Uterus (tissue), 4 donors: ENCODE measurements at regions of chr9 and their contacts with region 1.

Region 1: DNA sequence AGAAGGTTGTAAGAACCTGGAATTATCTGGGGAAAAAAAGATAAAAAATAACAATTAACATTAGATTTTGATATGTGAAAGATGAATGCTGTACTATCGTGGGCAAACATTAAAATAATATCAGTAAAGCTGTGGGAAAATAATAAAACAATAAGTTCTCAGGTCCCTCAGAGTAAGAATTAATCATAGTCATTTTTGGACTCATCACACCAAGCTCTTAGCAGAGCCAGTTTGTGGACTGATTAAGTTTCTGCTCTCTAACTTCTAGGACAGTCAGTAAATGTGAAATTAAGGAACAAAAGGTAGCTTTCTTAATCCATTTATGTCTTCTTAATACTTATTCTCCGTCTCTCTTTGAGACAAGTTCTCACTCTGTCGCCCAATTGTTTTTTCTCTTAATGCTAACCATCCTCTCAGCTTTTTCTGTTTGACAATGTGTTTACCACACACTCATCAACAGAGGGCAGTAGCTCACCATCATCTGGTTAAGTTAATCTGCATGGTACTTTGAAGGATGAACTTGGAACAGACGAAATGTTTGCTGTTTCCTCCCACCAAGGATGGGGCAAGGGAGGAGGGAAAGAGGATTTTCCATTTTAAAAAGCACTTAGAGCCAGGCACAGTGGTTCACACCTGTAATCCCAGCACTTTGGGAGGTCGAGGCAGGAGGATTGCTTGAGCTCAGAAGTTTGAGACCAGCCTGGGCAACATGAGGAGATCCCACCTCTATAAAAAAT is 5.3 kb upstream of the ACO1 start:
- DNase-seq: peak in 1 of 2 donors; percentile 51
- H3K4me3 ChIP-seq: peak overlapping the region in 1 of 2 donors; percentile 1
- H3K27ac ChIP-seq: peak overlapping the region in 1 of 2 donors; percentile 31
- H3K4me1 ChIP-seq: no peaks in the 10 kb centered on the region
- H3K27me3 ChIP-seq: no peaks in the 10 kb centered on the region
- CTCF ChIP-seq: peak; percentile 72 to 90 (median 83)
- POLR2A ChIP-seq: no peak

Region 2: GRCh38 chr9:32579706-32580331 is 200.7 kb after region 1 on chr9:
- intact Hi-C with region 1: loop called (anchors 5 kb)
- DNase-seq: peak; percentile 66 to 68
- H3K4me3 ChIP-seq: no peak overlapping the region
- H3K27ac ChIP-seq: no peak overlapping the region
- H3K4me1 ChIP-seq: no peaks in the 10 kb centered on the region
- H3K27me3 ChIP-seq: no peaks in the 10 kb centered on the region
- CTCF ChIP-seq: peak; percentile 79 to 84 (median 82)
- POLR2A ChIP-seq: no peak

Region 3: GRCh38 chr9:32968101-32969011 is 589.2 kb after region 1 on chr9:
- intact Hi-C with region 1: loop called (anchors 5 kb)
- DNase-seq: peak; percentile 47
- H3K4me3 ChIP-seq: no peak overlapping the region
- H3K27ac ChIP-seq: no peak overlapping the region
- H3K4me1 ChIP-seq: no peaks in the 10 kb centered on the region
- H3K27me3 ChIP-seq: no peaks in the 10 kb centered on the region
- CTCF ChIP-seq: peak; percentile 60 to 74 (median 66)
- POLR2A ChIP-seq: no peak